Breast epithelium (tissue), 4 donors: ENCODE measurements at regions of chr19 and their contacts with region 1.

Region 1: DNA sequence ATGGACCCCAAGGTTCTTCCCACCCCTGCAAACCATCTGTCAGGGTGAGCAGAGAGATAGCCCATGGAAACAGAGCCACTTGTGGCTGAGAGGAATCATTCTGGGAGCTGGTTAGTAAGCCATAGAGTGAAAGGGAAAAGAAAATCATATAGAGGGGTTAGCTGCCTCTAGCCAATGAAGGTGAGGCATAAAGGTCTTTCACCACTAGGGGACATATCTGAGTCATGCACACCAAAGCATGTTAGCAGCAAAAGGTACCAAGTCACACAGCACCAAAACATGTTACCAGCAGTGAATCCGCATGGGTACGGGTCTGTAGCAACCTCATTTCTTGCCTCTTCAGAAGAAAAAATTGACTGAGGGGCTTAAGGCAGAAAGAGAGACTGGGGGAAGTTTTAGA is 76.7 kb upstream of the ZNF43 start:
- DNase-seq: no peak
- H3K4me3 ChIP-seq: no peak overlapping the region
- H3K27ac ChIP-seq: no peak overlapping the region
- H3K4me1 ChIP-seq: no peaks in the 10 kb centered on the region
- H3K27me3 ChIP-seq: no peaks in the 10 kb centered on the region
- CTCF ChIP-seq: no peak
- POLR2A ChIP-seq: no peak

Region 2: DNA sequence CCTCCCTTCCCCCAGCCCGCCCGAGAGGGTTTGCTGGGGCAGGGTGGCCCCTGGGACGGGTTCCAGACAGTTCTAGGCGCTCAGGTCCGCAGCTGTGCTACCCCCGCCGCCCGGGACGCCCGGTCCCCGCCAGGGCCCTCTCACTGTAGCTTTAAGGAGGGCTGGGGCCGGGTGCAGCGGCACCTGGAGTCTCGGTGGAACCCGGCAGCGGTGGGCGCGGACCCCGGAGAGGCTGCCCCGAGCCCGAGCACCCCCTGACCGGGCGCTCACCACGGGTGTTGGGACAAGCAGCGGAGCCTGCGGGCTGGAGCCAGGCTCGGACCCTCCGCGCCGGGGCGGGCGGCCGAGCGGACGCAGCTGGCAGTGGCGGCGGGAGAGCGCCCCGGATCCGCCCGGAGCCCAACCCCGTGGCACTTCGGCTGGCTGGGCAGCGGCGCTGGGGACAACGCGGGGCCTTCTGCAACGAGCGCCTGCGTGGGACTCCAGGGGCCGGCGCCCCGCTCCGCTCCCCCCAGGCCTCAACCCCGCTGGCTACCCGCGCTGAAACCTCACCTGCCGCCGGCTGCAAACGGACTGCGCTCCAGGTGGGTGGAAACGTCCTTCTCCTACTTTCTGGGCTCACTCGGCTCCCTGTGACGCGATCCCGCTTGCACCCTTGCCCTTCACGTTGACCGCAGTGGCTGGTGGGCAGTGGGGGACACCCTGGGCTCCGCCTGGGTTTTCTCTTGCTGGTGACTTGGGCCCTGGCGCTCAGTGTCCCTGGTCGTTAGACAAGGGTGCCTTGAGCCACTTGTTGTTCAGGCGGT is 326.1 kb before region 1 on chr19:
- intact Hi-C with region 1: loop called (anchors 5 kb)
- DNase-seq: no peak
- H3K4me3 ChIP-seq: peak overlapping the region; percentile 49 to 76 (median 68)
- H3K27ac ChIP-seq: no peak overlapping the region
- H3K4me1 ChIP-seq: no peaks in the 10 kb centered on the region
- H3K27me3 ChIP-seq: no peaks in the 10 kb centered on the region
- CTCF ChIP-seq: no peak
- POLR2A ChIP-seq: no peak

Region 3: DNA sequence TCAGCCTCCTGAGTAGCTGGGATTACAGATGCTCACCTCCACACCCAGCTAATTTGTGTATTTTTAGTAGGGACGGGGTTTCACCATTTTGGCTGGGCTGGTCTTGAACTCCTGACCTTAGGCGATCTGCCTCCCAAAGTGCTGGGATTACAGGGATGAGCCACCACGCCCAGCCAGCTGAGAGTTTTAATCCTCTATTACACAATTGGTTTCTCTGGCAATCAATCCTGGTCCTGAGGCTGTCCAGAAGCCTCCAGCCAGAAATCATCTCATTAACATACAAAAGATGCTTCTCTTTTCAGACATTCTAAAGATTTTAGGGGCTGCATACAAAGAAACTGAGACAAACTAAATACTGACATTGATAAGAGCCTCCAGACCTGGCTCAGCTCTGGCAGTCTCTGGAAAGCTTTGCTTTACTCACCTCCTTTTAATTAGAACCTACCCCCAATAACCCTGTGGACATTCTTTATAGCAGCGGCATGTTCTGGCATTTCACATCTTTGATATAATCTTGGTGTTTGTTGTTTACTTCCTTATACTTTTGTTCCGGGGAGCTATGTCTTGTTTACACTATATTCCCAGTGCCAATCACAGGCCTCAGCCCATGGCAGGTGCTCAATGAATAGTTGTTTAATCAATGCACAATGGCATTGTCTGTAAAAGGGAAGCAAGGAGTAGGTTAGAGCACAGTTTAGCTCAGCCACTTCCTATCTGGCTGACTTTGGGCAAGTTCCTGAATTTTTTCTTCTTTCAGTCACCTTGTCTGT is 1341.7 kb after region 1 on chr19:
- intact Hi-C with region 1: no loop called
- DNase-seq: no peak
- H3K4me3 ChIP-seq: no peak overlapping the region
- H3K27ac ChIP-seq: no peak overlapping the region
- H3K4me1 ChIP-seq: no peaks in the 10 kb centered on the region
- H3K27me3 ChIP-seq: no peaks in the 10 kb centered on the region
- CTCF ChIP-seq: no peak
- POLR2A ChIP-seq: no peak